WTC11 (cell line): ENCODE measurements at regions of chr14 and their contacts with region 1.

Region 1: GRCh38 chr14:30214461-30215090 is 286.9 kb upstream of the PRKD1 start:
- DNase-seq: no peak
- ATAC-seq: peak; percentile 70
- H3K4me3 Mint-ChIP-seq: no peak overlapping the region
- H3K27ac Mint-ChIP-seq: no peak overlapping the region
- H3K4me1 Mint-ChIP-seq: no peaks in the 10 kb centered on the region
- H3K27me3 Mint-ChIP-seq: no peaks in the 10 kb centered on the region
- CTCF ChIP-seq: peak; percentile 51

Region 2: GRCh38 chr14:29548948-29549370 is 665.6 kb before region 1 on chr14:
- CTCF ChIA-PET with region 1: interaction called, 24 read pairs
- POLR2A ChIA-PET with region 1: no interaction called
- DNase-seq: no peak
- ATAC-seq: peak; percentile 69
- H3K4me3 Mint-ChIP-seq: no peak overlapping the region
- H3K27ac Mint-ChIP-seq: no peak overlapping the region
- H3K4me1 Mint-ChIP-seq: no peaks in the 10 kb centered on the region
- H3K27me3 Mint-ChIP-seq: no peaks in the 10 kb centered on the region
- CTCF ChIP-seq: peak; percentile 46

Region 3: DNA sequence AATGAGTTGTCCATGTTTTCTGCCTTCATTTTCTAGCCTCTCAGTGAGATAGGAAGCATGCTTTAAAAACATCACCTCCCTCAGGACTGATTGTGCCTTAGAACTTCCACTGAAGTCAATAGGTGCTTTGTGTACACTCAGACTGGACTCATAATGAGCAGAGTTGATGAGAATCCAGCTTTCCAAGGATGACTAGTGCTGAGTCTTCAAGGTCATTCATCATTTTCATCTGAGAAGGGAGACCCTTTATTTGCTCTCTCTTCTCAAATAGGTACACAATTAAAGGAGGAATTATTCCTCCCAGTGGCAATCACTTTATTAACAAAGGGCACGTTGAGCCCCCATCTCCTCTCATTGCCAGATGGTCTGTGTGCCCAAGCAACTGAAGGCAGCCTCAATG is 76.0 kb before region 1 on chr14:
- CTCF ChIA-PET with region 1: no interaction called
- POLR2A ChIA-PET with region 1: no interaction called
- DNase-seq: no peak
- ATAC-seq: no peak
- H3K4me3 Mint-ChIP-seq: no peak overlapping the region
- H3K27ac Mint-ChIP-seq: no peak overlapping the region
- H3K4me1 Mint-ChIP-seq: no peaks in the 10 kb centered on the region
- H3K27me3 Mint-ChIP-seq: no peaks in the 10 kb centered on the region
- CTCF ChIP-seq: no peak

Region 4: DNA sequence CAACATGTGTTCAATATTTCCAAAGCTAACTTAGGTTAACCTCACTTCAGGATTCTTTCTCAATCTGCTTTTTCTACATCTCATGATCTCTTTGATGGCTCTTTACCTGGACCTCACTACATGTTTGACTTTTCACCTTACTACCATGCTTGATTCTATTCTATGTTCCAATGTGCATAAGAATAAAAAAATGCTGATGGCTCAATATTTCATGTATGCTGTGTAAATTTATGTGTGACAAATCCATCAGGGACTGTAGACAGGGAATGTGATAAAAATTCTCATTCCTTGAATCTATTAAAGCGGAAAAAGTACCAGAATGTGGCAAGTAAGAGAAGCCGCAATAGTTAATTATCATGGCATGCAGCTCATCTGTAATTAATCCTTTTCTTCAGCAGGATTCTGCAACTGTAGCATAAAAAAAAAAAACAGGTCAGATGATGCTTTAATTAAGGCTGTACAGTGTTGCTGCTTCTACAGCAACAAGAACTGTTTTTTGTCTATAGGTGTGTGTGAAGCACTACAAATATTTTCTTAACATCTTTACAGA is 10.1 kb before region 1 on chr14:
- CTCF ChIA-PET with region 1: interaction called, 14 read pairs
- POLR2A ChIA-PET with region 1: interaction called, 4 read pairs
- DNase-seq: no peak
- ATAC-seq: no peak
- H3K4me3 Mint-ChIP-seq: no peak overlapping the region
- H3K27ac Mint-ChIP-seq: no peak overlapping the region
- H3K4me1 Mint-ChIP-seq: no peaks in the 10 kb centered on the region
- H3K27me3 Mint-ChIP-seq: no peaks in the 10 kb centered on the region
- CTCF ChIP-seq: no peak

Region 5: GRCh38 chr14:30283826-30284446 is 69.4 kb after region 1 on chr14:
- CTCF ChIA-PET with region 1: interaction called, 15 read pairs
- POLR2A ChIA-PET with region 1: no interaction called
- DNase-seq: peak; percentile 73
- ATAC-seq: peak; percentile 93
- H3K4me3 Mint-ChIP-seq: no peak overlapping the region
- H3K27ac Mint-ChIP-seq: no peak overlapping the region
- H3K4me1 Mint-ChIP-seq: no peaks in the 10 kb centered on the region
- H3K27me3 Mint-ChIP-seq: no peaks in the 10 kb centered on the region
- CTCF ChIP-seq: no peak; the same call in 1 of the 2 replicates

Region 6: DNA sequence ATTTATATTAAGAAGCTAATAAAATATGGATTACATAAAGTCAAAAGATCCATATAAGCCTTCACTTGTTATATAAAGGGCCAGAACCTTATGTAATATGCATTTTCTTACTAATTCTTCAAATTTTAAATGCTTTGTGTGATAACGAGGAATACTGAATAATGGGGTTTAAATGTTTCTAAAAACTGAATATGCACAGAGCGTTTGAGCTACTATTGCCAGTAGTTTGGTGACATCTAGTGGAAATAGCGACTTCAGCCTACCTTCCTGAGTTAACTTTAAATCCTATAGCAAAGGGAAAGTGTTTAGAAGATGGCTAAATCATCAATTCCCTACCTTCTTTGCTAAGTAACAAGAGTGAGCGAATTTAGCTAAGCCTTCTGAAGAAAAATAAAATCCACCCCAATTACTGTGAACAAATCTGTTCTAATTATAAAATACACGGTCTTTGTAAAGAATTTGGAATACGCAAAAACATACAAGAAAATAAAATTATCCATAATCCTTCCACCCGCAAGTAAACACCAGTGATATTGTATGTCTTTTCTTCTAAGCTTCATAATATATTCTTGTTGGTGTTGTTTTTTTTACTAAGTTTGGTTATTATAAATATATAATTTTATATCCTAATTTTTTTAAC is 228.9 kb after region 1 on chr14:
- CTCF ChIA-PET with region 1: interaction called, 16 read pairs
- POLR2A ChIA-PET with region 1: no interaction called
- DNase-seq: no peak
- ATAC-seq: peak; percentile 59; the same call in 1 of the 2 replicates
- H3K4me3 Mint-ChIP-seq: no peak overlapping the region
- H3K27ac Mint-ChIP-seq: no peak overlapping the region
- H3K4me1 Mint-ChIP-seq: peaks cover 8% of the 10 kb centered on the region
- H3K27me3 Mint-ChIP-seq: no peaks in the 10 kb centered on the region
- CTCF ChIP-seq: no peak